ENCODE measurements at regions of chr15 and their contacts with region 1.

Region 1: GRCh38 chr15:89039142-89039541 is 49.1 kb upstream of the ABHD2 start:
- DNase-seq: no peak
- ATAC-seq: no peak
- H3K4me3 ChIP-seq: no peak overlapping the region
- H3K27ac ChIP-seq: no peak overlapping the region
- H3K4me1 ChIP-seq: peaks cover 0 to 2% of the 10 kb centered on the region in 2 donors
- H3K27me3 ChIP-seq: no peaks in the 10 kb centered on the region

Region 2: GRCh38 chr15:89023311-89023961 is 15.7 kb before region 1 on chr15:
- intact Hi-C with region 1: loop called in 1 of 2 experiments (anchors 2 kb)
- DNase-seq: peak in 1 of 2 donors; percentile 26
- ATAC-seq: no peak
- H3K4me3 ChIP-seq: no peak overlapping the region
- H3K27ac ChIP-seq: peak overlapping the region; percentile 51 to 93
- H3K4me1 ChIP-seq: peaks cover 8 to 10% of the 10 kb centered on the region in 2 donors
- H3K27me3 ChIP-seq: no peaks in the 10 kb centered on the region

Region 3: GRCh38 chr15:89087830-89088604 is 48.9 kb after region 1 on chr15 and contains the start of gene ABHD2:
- intact Hi-C with region 1: loop called in 1 of 2 experiments (anchors 1 kb)
- DNase-seq: peak; percentile 99 to 100
- ATAC-seq: peak; percentile 97
- H3K4me3 ChIP-seq: peak within 1 kb of the TSS; percentile 74 to 93
- H3K27ac ChIP-seq: peak within 1 kb of the TSS; percentile 88 to 97
- H3K4me1 ChIP-seq: peaks cover 0 to 3% of the 10 kb centered on the region in 2 donors
- H3K27me3 ChIP-seq: no peaks in the 10 kb centered on the region
- total RNA-seq, gene ABHD2: 135 to 221 TPM

Region 4: GRCh38 chr15:89101302-89102191 is 62.4 kb after region 1 on chr15:
- intact Hi-C with region 1: no loop called
- DNase-seq: peak; percentile 88 to 91
- ATAC-seq: peak; percentile 92
- H3K4me3 ChIP-seq: no peak overlapping the region
- H3K27ac ChIP-seq: peak overlapping the region; percentile 64 to 98
- H3K4me1 ChIP-seq: peaks cover 12 to 26% of the 10 kb centered on the region in 2 donors
- H3K27me3 ChIP-seq: no peaks in the 10 kb centered on the region

Measured in aorta (tissue), 5 donors.